Dorsolateral prefrontal cortex (tissue), 120 donors: ENCODE measurements at regions of chr2 and their contacts with region 1.

Region 1: GRCh38 chr2:215311625-215312396 is at the start of gene ATIC:
- DNase-seq: peak; percentile 83 to 95 (median 92)
- H3K4me3 ChIP-seq: peak within 1 kb of the TSS; percentile 65 to 92 (median 81)
- H3K27ac ChIP-seq: peak within 1 kb of the TSS; percentile 58 to 96 (median 90)
- H3K27me3 ChIP-seq: no peaks in the 10 kb centered on the region
- CTCF ChIP-seq: peak in 46 of 56 donors; percentile 13 to 69 (median 45)
- total RNA-seq, gene ATIC: 58.6 to 133 (median 83.7) TPM

Region 2: GRCh38 chr2:215269397-215270119 is 42.3 kb before region 1 on chr2:
- intact Hi-C with region 1: loop called in 1 of 2 experiments (anchors 5 kb)
- DNase-seq: peak in 5 of 10 donors; percentile 28 to 59 (median 46)
- H3K4me3 ChIP-seq: peak overlapping the region in 55 of 59 donors; percentile 1 to 58 (median 39)
- H3K27ac ChIP-seq: peak overlapping the region in 26 of 59 donors; percentile 2 to 76 (median 32)
- H3K27me3 ChIP-seq: no peaks in the 10 kb centered on the region
- CTCF ChIP-seq: peak; percentile 53 to 91 (median 83)

Region 3: DNA sequence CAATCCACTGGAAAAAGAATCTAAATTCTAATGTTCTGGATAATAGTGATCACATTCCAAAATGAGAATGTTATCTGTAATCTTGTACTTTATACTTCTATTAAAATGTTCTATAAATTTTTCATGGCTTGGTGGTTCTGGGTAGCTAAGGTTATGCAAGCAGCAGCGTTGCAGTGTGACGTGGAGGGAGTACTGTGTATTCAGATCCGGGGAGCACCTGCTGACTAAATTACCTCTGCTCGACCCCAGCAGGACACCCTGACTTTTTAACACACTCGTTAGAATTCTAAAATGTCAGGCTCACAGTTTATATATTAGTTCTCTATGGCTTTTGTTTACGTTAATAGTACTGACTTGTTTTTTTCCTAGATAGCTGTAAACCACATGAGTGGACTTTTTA is 13.0 kb after region 1 on chr2:
- intact Hi-C with region 1: loop called in 1 of 2 experiments (anchors 2 kb)
- DNase-seq: no peak
- H3K4me3 ChIP-seq: no peak overlapping the region
- H3K27ac ChIP-seq: peak overlapping the region in 37 of 59 donors; percentile 1 to 98 (median 41)
- H3K27me3 ChIP-seq: no peaks in the 10 kb centered on the region
- CTCF ChIP-seq: no peak

Region 4: GRCh38 chr2:215435809-215436704 is 124.2 kb after region 1 on chr2 and contains the start of gene FN1:
- intact Hi-C with region 1: loop called in 1 of 2 experiments (anchors 5 kb)
- DNase-seq: peak in 9 of 10 donors; percentile 62 to 83 (median 72)
- H3K4me3 ChIP-seq: peak within 1 kb of the TSS; percentile 42 to 80 (median 67)
- H3K27ac ChIP-seq: peak within 1 kb of the TSS in 56 of 59 donors; percentile 0 to 91 (median 73)
- H3K27me3 ChIP-seq: peaks cover 0 to 35% (median 4%) of the 10 kb centered on the region in 45 donors
- CTCF ChIP-seq: no peak
- total RNA-seq, gene FN1: 33.6 to 261 (median 71.4) TPM

Region 5: GRCh38 chr2:215454519-215455246 is 142.9 kb after region 1 on chr2:
- intact Hi-C with region 1: no loop called
- DNase-seq: no peak
- H3K4me3 ChIP-seq: no peak overlapping the region
- H3K27ac ChIP-seq: no peak overlapping the region
- H3K27me3 ChIP-seq: peaks cover 0 to 8% (median 0%) of the 10 kb centered on the region in 45 donors
- CTCF ChIP-seq: peak; percentile 33 to 91 (median 80)